Esophagus muscularis mucosa (tissue), 4 donors: ENCODE measurements at regions of chr14 and their contacts with region 1.

Region 1: GRCh38 chr14:24013654-24014514 is 25.2 kb downstream of the DHRS4L2 start:
- DNase-seq: no peak
- H3K4me3 ChIP-seq: no peak overlapping the region
- H3K27ac ChIP-seq: no peak overlapping the region
- H3K4me1 ChIP-seq: peaks cover 0 to 17% (median 5%) of the 10 kb centered on the region in 4 donors
- H3K27me3 ChIP-seq: no peaks in the 10 kb centered on the region
- CTCF ChIP-seq: peak; percentile 86 to 94 (median 88)
- EP300 ChIP-seq: no peak
- POLR2A ChIP-seq: no peak

Region 2: DNA sequence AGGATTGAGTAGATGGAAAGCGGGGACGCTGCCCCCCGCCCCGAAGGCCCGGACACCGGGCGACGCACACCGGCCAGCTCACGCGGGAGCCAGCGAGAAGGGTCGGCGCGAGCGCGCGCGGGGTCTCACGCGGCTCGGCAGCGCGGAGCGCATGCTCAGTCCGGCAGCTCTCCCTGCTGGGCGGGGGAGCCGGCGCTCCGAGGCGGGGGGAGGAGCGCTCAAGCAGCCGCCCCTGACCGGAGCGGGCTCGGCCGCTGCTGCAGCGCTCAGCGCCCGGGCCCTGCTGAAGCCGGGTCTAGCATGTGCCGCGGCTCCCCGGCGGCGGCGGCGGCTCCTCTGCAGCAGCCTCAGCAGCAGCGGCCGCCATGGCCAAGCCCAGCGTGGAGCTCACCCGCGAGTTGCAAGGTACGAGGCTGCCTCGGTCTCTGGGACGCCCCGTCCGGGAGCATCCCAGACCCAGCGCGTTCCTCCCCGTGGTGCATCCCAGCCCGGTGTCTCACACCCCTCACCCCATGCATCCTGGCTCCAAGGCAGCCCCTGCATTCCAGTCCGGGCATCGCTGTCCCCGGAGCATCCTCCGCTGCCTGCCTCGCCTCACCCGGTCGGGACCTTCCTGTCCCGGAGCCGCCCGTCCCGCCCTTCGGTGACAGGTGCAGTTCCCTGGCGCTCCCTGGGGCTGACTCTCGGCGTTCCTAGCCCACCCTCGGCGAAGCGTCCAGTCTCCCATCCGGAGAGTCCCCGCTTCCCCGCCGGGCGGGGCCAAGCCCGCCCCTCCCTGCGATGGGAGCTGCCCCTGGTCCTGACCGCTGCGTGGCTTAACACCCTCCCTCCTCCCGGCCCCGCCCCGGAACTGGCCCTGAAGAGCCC is 38.1 kb after region 1 on chr14 and contains the start of gene CARMIL3:
- intact Hi-C with region 1: loop called (anchors 5 kb)
- DNase-seq: no peak
- H3K4me3 ChIP-seq: peak within 1 kb of the TSS; percentile 55 to 73 (median 63)
- H3K27ac ChIP-seq: peak within 1 kb of the TSS; percentile 60 to 72 (median 66)
- H3K4me1 ChIP-seq: peaks cover 12 to 22% (median 19%) of the 10 kb centered on the region in 4 donors
- H3K27me3 ChIP-seq: peaks cover 0 to 12% (median 0%) of the 10 kb centered on the region in 4 donors
- CTCF ChIP-seq: no peak
- EP300 ChIP-seq: no peak
- POLR2A ChIP-seq: no peak
- total RNA-seq, gene CARMIL3: 0.17 to 0.29 TPM in 2 of 4 donors, not detected in the others

Region 3: DNA sequence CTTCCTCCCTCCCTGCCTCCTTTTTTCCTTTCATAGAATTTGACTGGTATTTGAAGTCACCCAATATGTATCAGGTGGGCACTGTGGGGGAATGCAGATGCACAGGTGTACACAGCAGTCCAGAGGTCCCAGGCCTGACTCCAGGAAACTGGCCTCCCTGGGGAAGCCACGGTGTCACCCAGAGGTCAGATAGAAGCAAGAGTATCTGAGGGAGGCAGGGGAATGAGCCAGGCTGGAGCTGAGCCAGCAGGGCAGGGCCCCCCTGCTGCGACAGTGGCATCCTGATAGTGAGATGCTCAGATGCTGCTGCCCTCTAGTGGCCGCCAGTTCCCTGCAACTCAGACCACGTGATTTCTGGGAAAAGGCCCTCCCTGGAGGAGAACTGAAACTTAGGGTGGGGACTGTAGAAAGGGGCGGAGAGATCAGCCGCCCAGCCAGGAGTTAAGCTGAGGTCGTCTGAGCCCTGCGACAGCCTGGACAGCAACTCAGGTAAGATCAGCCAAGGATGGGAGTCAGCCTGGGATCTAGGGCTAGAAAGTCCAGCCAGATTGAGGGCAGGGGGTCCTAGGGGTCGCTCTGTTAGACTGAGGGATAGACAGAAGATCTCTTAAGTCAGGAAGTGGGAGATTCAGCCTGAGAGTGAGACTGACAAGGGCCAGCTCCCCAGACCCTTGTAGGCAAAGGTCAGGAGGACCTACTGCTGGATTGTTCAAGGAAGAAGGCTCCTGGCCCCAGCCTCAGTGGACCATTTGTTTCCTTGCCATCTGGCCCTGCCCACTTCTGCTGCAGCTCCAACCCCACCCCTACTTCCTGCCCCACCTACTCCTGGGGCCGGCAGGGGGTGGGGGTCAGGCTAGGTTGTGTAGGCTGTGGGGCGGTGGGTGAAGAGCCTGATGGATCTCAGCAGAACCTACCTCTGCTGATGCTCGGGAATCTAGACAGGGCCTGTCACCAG is 147.2 kb after region 1 on chr14 and contains the start of gene IRF9:
- intact Hi-C with region 1: no loop called
- DNase-seq: peak; percentile 99
- H3K4me3 ChIP-seq: peak within 1 kb of the TSS; percentile 66 to 73 (median 69)
- H3K27ac ChIP-seq: peak within 1 kb of the TSS; percentile 88 to 92 (median 90)
- H3K4me1 ChIP-seq: peaks cover 27 to 48% (median 39%) of the 10 kb centered on the region in 4 donors
- H3K27me3 ChIP-seq: no peaks in the 10 kb centered on the region
- CTCF ChIP-seq: peak in 2 of 3 experiments; percentile 94 to 95
- EP300 ChIP-seq: no peak
- POLR2A ChIP-seq: no peak
- total RNA-seq, gene IRF9: 39.5 to 78.3 (median 63.2) TPM